ENCODE measurements at regions of chr12 and their contacts with region 1.

Region 1: GRCh38 chr12:90102957-90103652 is 394.5 kb upstream of the ATP2B1 start:
- DNase-seq: no peak
- H3K4me3 Mint-ChIP-seq: no peak overlapping the region
- H3K27ac Mint-ChIP-seq: peak overlapping the region; percentile 8
- H3K4me1 Mint-ChIP-seq: peaks cover 3% of the 10 kb centered on the region
- H3K27me3 Mint-ChIP-seq: no peaks in the 10 kb centered on the region

Region 2: GRCh38 chr12:89542912-89543592 is 560.1 kb before region 1 on chr12:
- CTCF ChIA-PET with region 1: interaction called, 25 read pairs
- DNase-seq: peak; percentile 75
- H3K4me3 Mint-ChIP-seq: no peak overlapping the region
- H3K27ac Mint-ChIP-seq: no peak overlapping the region
- H3K4me1 Mint-ChIP-seq: peaks cover 6% of the 10 kb centered on the region
- H3K27me3 Mint-ChIP-seq: no peaks in the 10 kb centered on the region

Region 3: GRCh38 chr12:90199006-90199405 is 95.9 kb after region 1 on chr12:
- CTCF ChIA-PET with region 1: no interaction called
- DNase-seq: no peak
- H3K4me3 Mint-ChIP-seq: no peak overlapping the region
- H3K27ac Mint-ChIP-seq: no peak overlapping the region
- H3K4me1 Mint-ChIP-seq: no peaks in the 10 kb centered on the region
- H3K27me3 Mint-ChIP-seq: no peaks in the 10 kb centered on the region

Measured in activated naive CD4-positive, alpha-beta T cell treated with anti-CD3 and anti-CD28 coated beads, Interleukin-2, amount 10 ng/mL, durations not matched to agents 7 days and 5 days (primary cell).